Activated T-helper 2 cell treated with anti-CD3 and anti-CD28 coated beads, Interferon-gamma antibody, Interleukin-2, Interleukin-4, amounts not matched to agents 10 μg/mL and 5 μg/mL and 100 μg/mL, durations not matched to agents 14 hours and 24 hours and 36 hours (primary cell): ENCODE measurements at regions of chr6 and their contacts with region 1.

Region 1: DNA sequence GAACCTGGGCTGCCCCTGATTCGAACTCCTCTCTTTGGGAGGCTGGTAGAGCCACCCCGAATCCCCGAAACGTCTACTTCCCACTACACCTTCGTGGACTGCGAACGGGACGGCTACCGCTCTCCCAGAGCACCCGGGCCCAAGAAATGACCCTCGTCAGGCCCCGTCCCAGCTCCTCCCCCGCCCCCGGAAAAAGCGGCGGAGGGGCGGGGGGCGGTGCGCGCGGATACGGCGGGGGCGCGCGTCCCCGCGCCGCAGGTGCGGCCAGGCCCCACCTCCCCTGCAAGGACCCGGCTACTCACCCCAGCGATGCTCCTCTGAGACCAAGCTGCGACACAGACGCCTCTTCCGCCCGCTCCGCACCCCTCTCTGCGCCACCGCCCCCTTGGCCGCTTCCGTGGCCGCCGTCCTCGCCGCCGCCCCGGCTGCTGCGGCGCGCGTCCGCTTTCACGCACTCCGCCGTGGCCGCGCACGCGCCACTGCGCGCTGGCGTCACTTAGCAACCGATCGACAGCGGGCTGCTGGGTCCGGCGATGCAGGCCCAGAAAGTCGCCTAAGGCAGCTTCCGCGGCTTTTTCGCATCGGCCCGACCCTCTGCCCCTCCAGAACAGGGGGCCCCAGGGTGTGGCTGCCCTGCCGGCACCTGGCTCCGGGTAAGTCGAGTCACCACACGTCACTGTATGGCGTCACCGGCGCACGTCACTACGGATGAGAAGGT is at the start of gene BTBD9:
- DNase-seq: peak; percentile 83
- H3K4me3 Mint-ChIP-seq: peak within 1 kb of the TSS; percentile 89
- H3K27ac Mint-ChIP-seq: peak within 1 kb of the TSS; percentile 86
- H3K4me1 Mint-ChIP-seq: peaks cover 44% of the 10 kb centered on the region
- H3K27me3 Mint-ChIP-seq: no peaks in the 10 kb centered on the region
- total RNA-seq, gene BTBD9: 12.7 and 15.2 TPM in 2 replicates

Region 2: DNA sequence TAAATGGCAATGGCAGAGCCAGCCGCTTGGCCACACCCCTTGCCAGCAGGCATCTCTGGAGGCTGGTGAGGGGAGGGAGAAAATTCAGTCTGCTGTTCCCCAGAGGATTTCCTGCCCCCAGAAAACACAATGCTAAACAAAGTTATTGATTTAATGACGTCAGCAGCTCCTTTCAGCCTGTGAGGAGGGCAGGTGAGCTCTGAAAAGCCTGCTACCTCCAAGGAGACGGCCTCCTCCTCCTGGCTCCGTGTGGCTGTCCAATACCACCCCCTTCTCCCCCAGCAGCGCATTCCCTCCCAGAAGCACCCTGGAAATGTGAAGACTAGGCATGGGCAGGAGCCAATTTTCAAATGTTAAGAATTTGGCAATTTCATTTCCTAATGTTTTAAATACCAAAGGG is 427.1 kb before region 1 on chr6:
- intact Hi-C with region 1: no loop called
- DNase-seq: no peak
- H3K4me3 Mint-ChIP-seq: no peak overlapping the region
- H3K27ac Mint-ChIP-seq: no peak overlapping the region
- H3K4me1 Mint-ChIP-seq: no peaks in the 10 kb centered on the region
- H3K27me3 Mint-ChIP-seq: no peaks in the 10 kb centered on the region

Region 3: GRCh38 chr6:38522322-38522721 is 117.3 kb before region 1 on chr6:
- intact Hi-C with region 1: no loop called
- DNase-seq: no peak
- H3K4me3 Mint-ChIP-seq: no peak overlapping the region
- H3K27ac Mint-ChIP-seq: no peak overlapping the region
- H3K4me1 Mint-ChIP-seq: peaks cover 18% of the 10 kb centered on the region
- H3K27me3 Mint-ChIP-seq: no peaks in the 10 kb centered on the region

Region 4: GRCh38 chr6:38570750-38571149 is 68.9 kb before region 1 on chr6:
- intact Hi-C with region 1: loop called (anchors 1 kb)
- DNase-seq: no peak
- H3K4me3 Mint-ChIP-seq: no peak overlapping the region
- H3K27ac Mint-ChIP-seq: no peak overlapping the region
- H3K4me1 Mint-ChIP-seq: peaks cover 24% of the 10 kb centered on the region
- H3K27me3 Mint-ChIP-seq: no peaks in the 10 kb centered on the region

Region 5: DNA sequence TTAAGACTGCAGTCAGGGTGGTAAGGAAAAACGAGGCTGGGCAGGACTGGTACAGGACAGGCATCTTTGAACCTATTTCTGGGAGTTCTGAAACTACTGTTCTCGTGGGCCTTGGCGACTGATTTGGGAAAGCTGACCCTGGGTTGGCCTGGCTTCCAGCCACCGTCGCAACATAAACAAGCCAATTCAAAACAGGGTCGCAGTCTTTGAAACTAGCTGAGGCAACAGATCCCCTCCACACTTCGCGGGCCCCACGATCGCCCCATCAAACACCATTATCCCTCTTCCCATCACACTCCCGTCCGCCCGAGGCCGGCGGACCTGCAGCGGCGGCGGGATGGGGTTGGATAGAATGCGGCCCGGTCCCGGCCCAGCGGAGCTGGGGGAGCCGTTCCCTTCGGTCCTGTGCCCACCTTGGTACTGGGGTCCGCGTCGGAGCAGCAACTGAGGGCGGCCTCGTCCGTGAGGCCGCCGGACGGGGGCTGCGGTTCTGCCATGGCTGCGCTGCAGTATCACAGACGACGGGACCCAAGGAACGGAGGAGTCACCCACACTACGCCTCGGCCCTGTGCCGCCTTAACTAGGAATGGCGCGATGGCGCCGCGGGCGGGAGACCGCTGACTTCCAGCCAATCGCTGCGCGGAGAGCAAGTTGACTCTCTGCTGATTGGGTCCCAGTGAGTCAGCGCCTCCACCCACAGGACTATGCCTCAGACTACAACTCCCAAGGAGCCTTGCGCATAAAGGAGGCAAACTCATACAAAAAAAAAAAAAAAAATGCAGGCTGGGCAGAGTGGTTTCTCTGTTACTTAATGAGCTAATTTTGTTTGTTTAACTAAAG is 63.1 kb after region 1 on chr6 and contains the start of gene GLO1:
- intact Hi-C with region 1: loop called (anchors 5 kb)
- DNase-seq: peak; percentile 95
- H3K4me3 Mint-ChIP-seq: peak within 1 kb of the TSS; percentile 97
- H3K27ac Mint-ChIP-seq: peak within 1 kb of the TSS; percentile 97
- H3K4me1 Mint-ChIP-seq: peaks cover 43% of the 10 kb centered on the region
- H3K27me3 Mint-ChIP-seq: peaks cover 3% of the 10 kb centered on the region
- total RNA-seq, gene GLO1: 129 and 134 TPM in 2 replicates

Region 6: GRCh38 chr6:38713812-38714211 is 74.2 kb after region 1 on chr6:
- intact Hi-C with region 1: loop called (anchors 2 kb)
- DNase-seq: peak; percentile 76
- H3K4me3 Mint-ChIP-seq: peak overlapping the region; percentile 56
- H3K27ac Mint-ChIP-seq: peak overlapping the region; percentile 87
- H3K4me1 Mint-ChIP-seq: peaks cover 44% of the 10 kb centered on the region
- H3K27me3 Mint-ChIP-seq: peaks cover 13% of the 10 kb centered on the region